Left cardiac atrium (tissue), 4 donors: ENCODE measurements at regions of chr14 and their contacts with region 1.

Region 1: DNA sequence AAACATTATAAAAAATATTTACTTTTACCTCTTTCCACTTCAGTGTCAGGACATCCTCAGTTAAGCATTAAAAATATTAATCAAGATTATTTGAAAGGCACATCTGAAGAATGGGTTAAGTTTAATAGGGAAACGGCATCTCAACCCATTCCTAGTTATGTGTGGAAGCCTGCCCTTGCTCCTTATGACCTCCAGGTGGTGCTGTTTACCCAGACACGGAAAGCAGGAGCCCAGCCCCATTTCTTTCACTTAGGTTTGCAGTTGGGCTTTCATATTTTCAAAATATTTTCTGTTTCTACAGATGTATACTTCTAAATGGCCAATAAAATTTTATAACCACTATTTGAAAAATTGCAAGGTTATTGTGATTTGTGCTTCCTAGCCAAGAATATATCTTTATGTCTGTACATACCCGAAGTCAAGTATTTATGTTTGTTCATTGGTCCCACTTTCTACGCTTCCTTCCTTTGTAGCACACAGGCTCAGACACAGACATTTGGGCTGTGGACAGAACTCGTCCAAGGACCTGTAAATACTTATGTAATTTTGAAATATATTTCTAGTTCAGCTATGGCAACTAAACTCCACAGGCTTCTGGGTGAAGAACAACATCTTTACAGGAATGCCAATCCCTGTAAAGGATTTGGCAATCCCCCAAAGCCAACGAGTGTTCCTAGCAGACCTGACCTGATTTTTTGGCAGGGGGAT is 247.1 kb downstream of the AKAP6 start:
- DNase-seq: peak; percentile 31
- ATAC-seq: peak; percentile 88 to 91

Region 2: DNA sequence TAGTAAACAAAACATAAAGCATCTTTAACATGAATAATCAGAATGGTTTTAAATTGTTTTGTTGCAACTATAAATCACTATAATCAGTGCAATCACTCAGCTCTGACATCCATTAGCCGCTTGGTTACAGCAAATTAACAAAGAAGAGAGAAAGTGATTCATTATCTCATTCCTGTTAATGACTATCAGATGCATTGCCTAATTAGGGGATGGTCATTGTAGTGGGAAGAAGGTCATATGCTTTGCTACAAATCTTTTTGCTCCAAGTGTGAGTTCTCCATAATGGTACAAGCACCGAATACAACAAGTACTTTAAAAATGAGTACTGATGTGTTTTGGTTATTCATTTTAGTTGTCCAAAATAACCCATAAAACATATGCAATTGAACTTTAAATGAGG is 24.8 kb after region 1 on chr14:
- intact Hi-C with region 1: no loop called
- DNase-seq: no peak
- ATAC-seq: no peak

Region 3: GRCh38 chr14:32611752-32612151 is 35.5 kb after region 1 on chr14:
- intact Hi-C with region 1: no loop called
- DNase-seq: no peak
- ATAC-seq: peak; percentile 70 to 90

Region 4: DNA sequence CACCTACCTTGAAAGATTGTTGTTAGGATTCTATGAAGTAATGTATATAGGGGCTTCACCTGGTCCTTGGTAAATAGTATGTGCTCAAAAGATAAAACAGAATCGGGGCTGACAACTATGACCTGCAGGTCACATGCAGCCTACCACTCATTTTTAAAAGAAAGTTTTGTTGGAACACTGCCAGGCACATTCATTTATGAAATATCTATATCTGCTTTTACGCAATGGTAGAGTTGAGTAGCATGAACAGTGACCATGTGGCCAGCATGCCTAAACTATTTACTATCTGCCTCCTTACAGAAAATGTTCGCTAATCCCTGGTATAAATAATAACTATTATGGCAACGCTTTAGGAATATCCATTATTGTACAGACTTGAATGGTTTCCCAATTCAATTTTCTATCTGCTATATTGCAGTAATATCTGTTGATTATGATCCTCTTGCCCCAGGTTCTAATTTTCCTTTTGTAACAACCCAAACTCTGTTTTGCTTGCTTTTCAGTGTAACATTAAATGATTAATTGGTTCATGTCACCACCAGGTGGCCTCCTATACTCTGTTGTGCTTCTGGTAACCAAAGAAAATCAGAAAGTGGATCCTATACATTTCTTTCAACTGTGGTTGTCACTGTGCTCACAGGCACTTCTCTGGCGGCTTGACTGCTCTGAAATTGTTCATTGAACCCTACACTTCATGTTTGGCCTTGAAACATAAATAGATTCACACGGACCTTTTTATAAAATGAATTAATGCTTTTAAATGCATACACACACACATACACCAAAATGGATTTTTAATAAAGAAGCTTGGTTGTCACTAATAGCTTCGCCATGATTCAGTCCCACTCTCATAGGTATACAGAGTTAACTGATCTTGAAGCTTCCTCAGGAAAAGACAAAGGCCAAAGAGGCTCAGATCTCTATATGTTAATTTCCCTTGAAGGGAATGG is 134.8 kb after region 1 on chr14:
- intact Hi-C with region 1: loop called in 1 of 2 experiments (anchors 10 kb)
- DNase-seq: no peak
- ATAC-seq: peak in 1 of 2 donors; percentile 27

Region 5: GRCh38 chr14:32998433-32998832 is 422.2 kb after region 1 on chr14:
- intact Hi-C with region 1: loop called in 1 of 2 experiments (anchors 5 kb)
- DNase-seq: no peak
- ATAC-seq: no peak

Region 6: DNA sequence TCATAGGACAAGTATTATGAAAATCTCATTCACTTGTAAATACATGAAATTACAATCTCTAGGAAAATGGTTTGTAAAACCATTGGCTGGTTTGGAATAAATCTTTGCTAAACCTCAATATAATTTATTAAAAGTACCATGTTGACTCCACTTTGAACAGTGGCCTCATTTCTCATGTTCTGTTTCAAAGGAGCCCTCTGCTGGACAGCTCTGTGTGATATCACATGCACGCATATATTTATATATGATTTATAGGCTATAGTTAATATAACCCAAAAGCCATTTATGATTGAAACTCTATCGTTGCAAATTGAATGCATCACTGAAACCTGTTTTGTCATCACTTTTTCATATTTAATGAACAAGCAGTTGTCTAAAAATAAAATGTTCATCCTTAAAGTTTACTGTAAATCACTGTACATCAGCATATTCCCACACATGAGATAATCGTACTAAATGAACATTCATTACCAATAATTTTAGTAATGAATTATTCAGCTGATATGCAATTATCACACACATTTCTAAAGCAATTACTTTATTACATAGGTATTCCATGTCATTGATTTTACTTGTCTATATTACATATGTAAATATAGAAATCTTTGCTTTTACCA is 856.3 kb after region 1 on chr14:
- intact Hi-C with region 1: loop called in 1 of 2 experiments (anchors 10 kb)
- DNase-seq: no peak
- ATAC-seq: no peak

Region 7: GRCh38 chr14:33792720-33793368 is 1216.6 kb after region 1 on chr14:
- intact Hi-C with region 1: loop called (anchors 5 to 10 kb)
- DNase-seq: peak; percentile 83
- ATAC-seq: peak; percentile 90 to 91

Region 8: GRCh38 chr14:34322940-34323418 is 1746.7 kb after region 1 on chr14:
- intact Hi-C with region 1: loop called in 1 of 2 experiments (anchors 10 kb)
- DNase-seq: peak; percentile 52
- ATAC-seq: peak; percentile 71 to 72